A549 (cell line): ENCODE measurements at regions of chr13 and their contacts with region 1.

Region 1: GRCh38 chr13:48975856-48976575 is at the start of gene FNDC3A:
- DNase-seq: peak; percentile 44 to 83
- ATAC-seq: peak; percentile 89 to 94
- H3K4me3 ChIP-seq: peak within 1 kb of the TSS; percentile 73
- H3K27ac ChIP-seq: peak within 1 kb of the TSS; percentile 97 to 99
- H3K4me1 ChIP-seq: peaks cover 30% of the 10 kb centered on the region; the same call in 2 of the 3 replicates
- CTCF ChIP-seq: peak; percentile 16; the same call in 1 of the 3 replicates
- EP300 ChIP-seq: no peak
- POLR2A ChIP-seq: peak; percentile 44
- RAD21 ChIP-seq: no peak; a peak in 1 of 5 replicates
- polyA plus RNA-seq, gene FNDC3A: 31.4 and 32.6 TPM in 2 replicates

Region 2: GRCh38 chr13:48783181-48783630 is 192.8 kb before region 1 on chr13:
- CTCF ChIA-PET with region 1: no interaction called
- POLR2A ChIA-PET with region 1: interaction called, 16 read pairs
- DNase-seq: peak; percentile 10 to 88
- ATAC-seq: peak; percentile 91 to 92
- H3K4me3 ChIP-seq: no peak overlapping the region
- H3K27ac ChIP-seq: peak overlapping the region; percentile 81 to 87
- H3K4me1 ChIP-seq: peaks cover 18% of the 10 kb centered on the region
- CTCF ChIP-seq: no peak
- EP300 ChIP-seq: peak; percentile 88 to 95; a peak in 4 of 5 replicates
- POLR2A ChIP-seq: no peak
- RAD21 ChIP-seq: peak in 1 of 2 experiments; percentile 56; a peak in 2 of 5 replicates

Region 3: DNA sequence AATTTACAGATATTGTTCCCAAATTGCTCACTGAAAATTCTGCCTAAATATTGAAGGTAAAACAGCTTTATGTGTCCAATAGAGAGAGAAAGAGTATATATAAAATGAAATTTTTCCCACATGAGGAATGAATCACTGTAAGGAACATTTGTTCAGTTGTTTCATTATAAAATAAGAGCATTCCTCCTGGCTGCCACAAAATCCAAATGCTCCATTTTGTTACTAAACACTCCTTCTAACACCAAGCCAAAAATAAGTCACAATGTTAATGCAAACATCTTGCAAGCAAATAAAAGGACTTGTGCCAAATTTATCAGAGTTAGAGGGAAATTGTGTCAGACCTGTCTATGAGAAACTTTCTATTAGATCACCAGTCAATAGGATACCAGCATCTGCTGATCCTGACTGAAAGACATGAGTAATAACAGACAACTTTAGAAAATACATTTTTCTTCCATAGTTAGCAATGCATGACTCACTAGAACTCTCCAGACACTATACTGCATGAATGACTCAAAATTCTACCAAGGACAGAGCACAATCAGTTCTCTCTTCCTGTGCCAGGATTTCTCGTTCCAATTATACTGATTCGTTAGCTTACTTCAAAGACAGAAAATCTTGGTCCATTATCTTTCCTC is 83.8 kb before region 1 on chr13:
- CTCF ChIA-PET with region 1: no interaction called
- POLR2A ChIA-PET with region 1: interaction called, 18 read pairs
- DNase-seq: peak; percentile 36 to 69
- ATAC-seq: peak; percentile 96 to 97
- H3K4me3 ChIP-seq: no peak overlapping the region
- H3K27ac ChIP-seq: peak overlapping the region; percentile 80 to 84
- H3K4me1 ChIP-seq: peaks cover 24% of the 10 kb centered on the region
- CTCF ChIP-seq: no peak
- EP300 ChIP-seq: peak; percentile 38 to 49; a peak in 2 of 5 replicates
- POLR2A ChIP-seq: no peak
- RAD21 ChIP-seq: no peak

Region 4: GRCh38 chr13:49110122-49110912 is 134.3 kb after region 1 on chr13:
- CTCF ChIA-PET with region 1: no interaction called
- POLR2A ChIA-PET with region 1: interaction called, 15 read pairs
- DNase-seq: peak; percentile 47 to 86
- ATAC-seq: peak; percentile 66 to 75; a peak in 5 of 6 replicates
- H3K4me3 ChIP-seq: peak overlapping the region; percentile 63
- H3K27ac ChIP-seq: peak overlapping the region; percentile 46 to 72
- H3K4me1 ChIP-seq: peaks cover 26% of the 10 kb centered on the region; the same call in 2 of the 3 replicates
- CTCF ChIP-seq: no peak
- EP300 ChIP-seq: no peak
- POLR2A ChIP-seq: no peak
- RAD21 ChIP-seq: no peak